ENCODE measurements at regions of chr17 and their contacts with region 1.

Region 1: GRCh38 chr17:17303010-17303846 is at the start of gene NT5M:
- DNase-seq: peak; percentile 38 to 51 (median 44)
- H3K4me3 ChIP-seq: peak within 1 kb of the TSS; percentile 34 to 75 (median 39)
- H3K4me3 Mint-ChIP-seq: peak within 1 kb of the TSS; percentile 83 to 93
- H3K27ac ChIP-seq: no peak within 1 kb of the TSS
- H3K27ac Mint-ChIP-seq: peak within 1 kb of the TSS in 2 of 7 donors; percentile 11 to 54
- H3K4me1 ChIP-seq: peaks cover 49 to 63% of the 10 kb centered on the region in 2 donors
- H3K4me1 Mint-ChIP-seq: peaks cover 55% of the 10 kb centered on the region
- H3K27me3 ChIP-seq: peaks cover 0 to 6% of the 10 kb centered on the region in 2 donors
- H3K27me3 Mint-ChIP-seq: peaks cover 5 to 17% (median 7%) of the 10 kb centered on the region in 3 donors
- CTCF ChIP-seq: no peak
- polyA plus RNA-seq, gene NT5M: 0.23 to 0.57 (median 0.25) TPM

Region 2: GRCh38 chr17:17001874-17002520 is 301.2 kb before region 1 on chr17:
- intact Hi-C with region 1: loop called in 1 of 2 experiments (anchors 10 kb)
- DNase-seq: peak; percentile 51 to 72 (median 61)
- H3K4me3 ChIP-seq: no peak overlapping the region
- H3K4me3 Mint-ChIP-seq: no peak overlapping the region
- H3K27ac ChIP-seq: no peak overlapping the region
- H3K27ac Mint-ChIP-seq: no peak overlapping the region
- H3K4me1 ChIP-seq: peaks cover 0 to 5% of the 10 kb centered on the region in 2 donors
- H3K4me1 Mint-ChIP-seq: peaks cover 2% of the 10 kb centered on the region
- H3K27me3 ChIP-seq: no peaks in the 10 kb centered on the region
- H3K27me3 Mint-ChIP-seq: peaks cover 4 to 17% (median 11%) of the 10 kb centered on the region in 3 donors
- CTCF ChIP-seq: peak; percentile 96

Region 3: DNA sequence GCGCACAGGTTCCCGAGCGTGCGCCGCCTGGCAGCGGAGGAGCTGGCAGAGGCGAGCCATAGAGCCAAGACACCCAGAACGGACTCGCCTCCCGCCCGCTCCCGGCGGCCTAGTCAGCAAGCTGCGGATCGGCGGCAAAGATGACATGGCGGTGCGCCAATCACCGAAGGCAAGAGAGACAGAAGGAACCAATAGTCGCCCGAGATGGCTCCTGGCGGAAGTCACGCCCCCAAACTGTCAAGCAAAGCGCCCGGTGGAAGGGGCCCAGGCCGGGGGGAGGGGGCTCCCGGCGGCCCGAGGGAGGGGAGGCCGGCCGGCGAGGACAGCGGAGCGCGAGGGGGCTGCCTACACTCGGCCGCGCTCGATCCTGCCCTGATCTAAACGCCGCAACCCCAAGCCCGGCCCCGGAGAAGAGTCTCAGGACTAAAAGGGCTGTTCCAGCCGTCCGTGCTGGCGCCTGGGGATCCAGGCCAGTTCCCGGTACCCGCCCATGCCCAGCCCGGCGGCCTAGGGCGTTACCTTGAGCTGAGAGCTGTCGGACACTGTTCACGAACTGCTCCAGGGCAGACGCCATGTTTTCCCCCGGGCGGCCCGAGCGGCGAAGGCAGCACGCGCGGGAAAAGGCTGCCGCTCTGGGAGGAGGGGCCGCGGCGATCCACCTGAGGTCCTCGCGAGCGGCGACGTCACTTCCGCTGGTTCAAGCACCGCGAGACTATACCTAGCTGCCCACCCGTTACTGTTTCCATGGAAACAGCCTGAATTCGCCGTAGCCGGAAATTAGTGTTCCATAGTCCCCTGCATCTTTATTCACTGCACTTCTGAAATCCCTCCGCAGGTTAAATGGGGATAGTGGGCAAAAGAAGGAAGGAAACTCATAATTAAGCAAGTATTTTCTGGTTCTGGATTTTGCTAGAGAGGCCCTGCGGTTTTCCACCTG is 22.3 kb before region 1 on chr17 and contains the start of gene COPS3:
- intact Hi-C with region 1: loop called in 1 of 2 experiments (anchors 2 kb)
- DNase-seq: peak; percentile 93 to 97 (median 96)
- H3K4me3 ChIP-seq: peak within 1 kb of the TSS; percentile 57 to 94 (median 87)
- H3K4me3 Mint-ChIP-seq: peak within 1 kb of the TSS; percentile 79 to 96
- H3K27ac ChIP-seq: peak within 1 kb of the TSS; percentile 90 to 95
- H3K27ac Mint-ChIP-seq: peak within 1 kb of the TSS; percentile 89 to 97 (median 95)
- H3K4me1 ChIP-seq: peaks cover 54 to 64% of the 10 kb centered on the region in 2 donors
- H3K4me1 Mint-ChIP-seq: peaks cover 54% of the 10 kb centered on the region
- H3K27me3 ChIP-seq: no peaks in the 10 kb centered on the region
- H3K27me3 Mint-ChIP-seq: peaks cover 0 to 2% (median 0%) of the 10 kb centered on the region in 3 donors
- CTCF ChIP-seq: no peak
- polyA plus RNA-seq, gene COPS3: 47.6 to 122 (median 117) TPM

Region 4: DNA sequence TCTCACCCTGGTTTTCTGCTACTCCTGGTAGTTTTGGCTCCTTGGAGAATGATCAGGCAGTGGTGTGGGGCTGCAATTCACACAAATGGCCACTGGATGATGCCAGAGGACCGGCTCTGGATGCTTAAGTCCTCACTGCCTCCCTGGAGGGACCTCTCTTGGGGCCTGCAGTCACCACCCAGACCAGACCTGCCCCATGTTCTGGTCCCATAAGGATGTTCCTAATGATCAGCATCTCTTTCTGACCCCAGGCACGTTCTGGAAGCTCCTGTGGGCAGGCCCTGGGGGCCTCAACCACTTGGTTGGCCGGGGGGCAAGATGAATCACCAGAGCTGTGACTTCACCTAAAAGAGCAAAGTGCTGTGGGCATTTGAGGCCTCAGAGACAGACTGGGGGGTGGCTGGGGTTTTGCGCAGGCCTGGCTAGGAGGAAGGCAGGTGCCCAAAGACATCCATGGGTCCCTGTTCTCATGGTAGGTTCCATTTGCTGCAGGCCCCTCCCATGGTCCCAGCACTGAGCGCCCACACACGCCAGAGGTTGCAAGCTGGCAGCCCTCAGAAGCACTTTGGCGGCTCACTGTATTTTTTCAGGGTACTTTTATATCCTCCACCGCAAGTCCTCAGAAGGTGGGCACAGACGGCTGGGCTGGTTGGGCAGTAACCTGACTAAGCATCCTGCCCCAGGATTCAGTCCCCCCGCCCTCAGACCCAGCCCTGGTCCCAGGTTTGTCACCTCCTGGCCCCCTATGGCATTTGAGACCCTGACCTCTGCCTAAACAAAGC is 53.1 kb after region 1 on chr17:
- intact Hi-C with region 1: no loop called
- DNase-seq: peak; percentile 61 to 72 (median 70)
- H3K4me3 ChIP-seq: no peak overlapping the region
- H3K4me3 Mint-ChIP-seq: no peak overlapping the region
- H3K27ac ChIP-seq: no peak overlapping the region
- H3K27ac Mint-ChIP-seq: peak overlapping the region in 1 of 7 donors; percentile 54
- H3K4me1 ChIP-seq: peaks cover 2 to 3% of the 10 kb centered on the region in 2 donors
- H3K4me1 Mint-ChIP-seq: peaks cover 2% of the 10 kb centered on the region
- H3K27me3 ChIP-seq: no peaks in the 10 kb centered on the region
- H3K27me3 Mint-ChIP-seq: peaks cover 0 to 4% (median 2%) of the 10 kb centered on the region in 3 donors
- CTCF ChIP-seq: peak; percentile 98